CD4-positive, alpha-beta T cell (primary cell): ENCODE measurements at regions of chr10 and their contacts with region 1.

Region 1: GRCh38 chr10:69004821-69005220 is 16.2 kb downstream of the KIFBP start:
- DNase-seq: peak in 3 of 14 experiments; percentile 71 to 75 (median 74)
- ATAC-seq: peak; percentile 79
- H3K4me3 ChIP-seq: no peak overlapping the region
- H3K4me3 Mint-ChIP-seq: no peak overlapping the region
- H3K27ac ChIP-seq: no peak overlapping the region
- H3K27ac Mint-ChIP-seq: no peak overlapping the region
- H3K4me1 ChIP-seq: no peaks in the 10 kb centered on the region
- H3K4me1 Mint-ChIP-seq: peaks cover 5% of the 10 kb centered on the region
- H3K27me3 ChIP-seq: no peaks in the 10 kb centered on the region
- H3K27me3 Mint-ChIP-seq: no peaks in the 10 kb centered on the region
- CTCF ChIP-seq: peak; percentile 75

Region 2: DNA sequence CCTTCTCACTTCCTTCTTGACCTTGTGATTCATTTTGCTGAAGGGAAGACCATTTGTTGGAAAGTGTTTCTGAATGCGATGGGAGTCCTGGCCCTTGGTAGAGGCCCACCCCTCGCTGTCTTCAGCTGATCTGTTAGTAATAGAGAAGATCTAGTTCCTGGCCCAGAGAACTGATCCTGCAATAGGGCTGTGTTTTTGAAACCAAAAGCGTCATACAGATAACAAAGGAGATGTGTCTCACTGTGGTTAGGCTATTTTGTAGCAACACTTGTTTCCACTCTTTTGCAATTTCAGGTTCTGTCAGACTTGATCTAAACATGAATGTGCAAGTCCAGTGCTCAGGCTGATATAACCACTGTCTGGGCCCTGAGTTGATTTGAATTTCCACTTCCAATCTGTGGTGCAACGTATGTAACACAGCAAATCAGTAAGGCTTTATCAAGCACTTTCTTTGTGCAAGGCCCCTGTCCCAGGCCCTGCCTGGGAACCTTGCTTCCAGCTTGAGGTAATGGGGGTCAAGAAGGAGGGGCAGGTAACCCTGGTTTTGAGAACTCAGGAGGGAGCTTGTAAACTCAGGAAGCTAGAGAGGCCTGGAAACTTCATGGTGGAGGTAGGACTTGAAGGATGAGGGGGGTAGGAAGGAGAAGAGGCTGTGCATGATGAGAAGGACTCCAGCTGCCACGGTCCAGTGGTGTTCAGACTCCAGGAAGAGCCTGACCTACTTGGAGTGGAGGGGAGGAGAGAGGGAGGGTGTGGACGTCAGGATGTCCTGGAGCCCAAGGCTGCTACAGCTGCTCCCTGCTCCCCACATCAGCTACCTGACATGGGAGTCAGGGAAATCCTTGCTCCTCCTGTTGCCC is 40.9 kb after region 1 on chr10:
- CTCF ChIA-PET with region 1: interaction called, 4 read pairs
- POLR2A ChIA-PET with region 1: interaction called, 3 read pairs
- intact Hi-C with region 1: loop called in 1 of 2 experiments (anchors 5 kb)
- DNase-seq: peak in 10 of 14 experiments; percentile 10 to 78 (median 22)
- ATAC-seq: peak; percentile 83
- H3K4me3 ChIP-seq: no peak overlapping the region
- H3K4me3 Mint-ChIP-seq: peak overlapping the region; percentile 69
- H3K27ac ChIP-seq: peak overlapping the region; percentile 60 to 72
- H3K27ac Mint-ChIP-seq: peak overlapping the region; percentile 93
- H3K4me1 ChIP-seq: peaks cover 52% of the 10 kb centered on the region
- H3K4me1 Mint-ChIP-seq: peaks cover 31% of the 10 kb centered on the region
- H3K27me3 ChIP-seq: no peaks in the 10 kb centered on the region
- H3K27me3 Mint-ChIP-seq: no peaks in the 10 kb centered on the region
- CTCF ChIP-seq: no peak

Region 3: DNA sequence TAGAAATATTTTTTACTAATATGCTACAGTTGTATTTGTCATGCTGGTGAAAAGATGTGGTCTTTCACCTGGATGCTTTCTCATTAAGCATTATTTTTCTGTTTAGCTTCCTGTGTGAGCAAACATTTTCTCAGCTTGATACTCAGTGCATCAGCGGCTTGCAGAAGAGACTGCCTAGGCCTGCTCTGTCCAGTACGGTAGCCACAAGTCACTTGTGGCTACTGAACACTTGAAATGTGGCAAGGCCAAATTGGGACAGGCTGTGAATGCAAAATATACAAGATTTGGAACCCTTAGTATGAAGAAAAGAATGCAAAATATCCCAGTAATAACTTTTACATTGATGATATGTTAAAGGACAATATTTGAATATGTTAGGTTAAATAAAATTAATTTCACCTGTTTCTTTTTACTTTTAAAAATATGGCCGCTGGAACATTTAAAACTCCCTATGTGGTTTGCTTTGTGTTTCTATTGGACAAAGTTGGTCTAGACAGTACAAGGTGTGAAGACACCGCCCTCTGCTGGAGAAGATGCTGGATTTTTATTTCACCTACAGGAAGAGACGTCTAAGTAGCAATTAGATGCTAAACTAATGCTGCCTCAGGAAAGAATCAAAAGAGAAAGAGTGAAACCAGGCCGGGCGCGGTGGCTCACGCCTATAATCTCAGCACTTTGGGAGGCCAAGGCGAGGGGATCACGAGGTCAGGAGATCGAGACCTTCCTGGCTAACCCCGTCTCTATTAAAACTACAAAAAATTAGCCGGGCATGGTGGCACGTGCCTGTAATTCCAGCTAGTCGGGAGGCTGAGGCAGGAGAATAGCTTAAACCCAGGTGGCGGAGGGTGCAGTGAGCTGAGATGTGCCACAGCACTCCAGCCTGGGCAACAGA is 88.4 kb after region 1 on chr10:
- CTCF ChIA-PET with region 1: interaction called, 57 read pairs
- POLR2A ChIA-PET with region 1: interaction called, 54 read pairs
- intact Hi-C with region 1: loop called (anchors 1 kb)
- DNase-seq: peak; percentile 54 to 96 (median 76)
- ATAC-seq: peak; percentile 33
- H3K4me3 ChIP-seq: no peak overlapping the region
- H3K4me3 Mint-ChIP-seq: peak overlapping the region; percentile 36
- H3K27ac ChIP-seq: peak overlapping the region; percentile 49 to 52
- H3K27ac Mint-ChIP-seq: peak overlapping the region; percentile 94
- H3K4me1 ChIP-seq: peaks cover 60% of the 10 kb centered on the region
- H3K4me1 Mint-ChIP-seq: peaks cover 53% of the 10 kb centered on the region
- H3K27me3 ChIP-seq: no peaks in the 10 kb centered on the region
- H3K27me3 Mint-ChIP-seq: no peaks in the 10 kb centered on the region
- CTCF ChIP-seq: peak; percentile 88

Region 4: DNA sequence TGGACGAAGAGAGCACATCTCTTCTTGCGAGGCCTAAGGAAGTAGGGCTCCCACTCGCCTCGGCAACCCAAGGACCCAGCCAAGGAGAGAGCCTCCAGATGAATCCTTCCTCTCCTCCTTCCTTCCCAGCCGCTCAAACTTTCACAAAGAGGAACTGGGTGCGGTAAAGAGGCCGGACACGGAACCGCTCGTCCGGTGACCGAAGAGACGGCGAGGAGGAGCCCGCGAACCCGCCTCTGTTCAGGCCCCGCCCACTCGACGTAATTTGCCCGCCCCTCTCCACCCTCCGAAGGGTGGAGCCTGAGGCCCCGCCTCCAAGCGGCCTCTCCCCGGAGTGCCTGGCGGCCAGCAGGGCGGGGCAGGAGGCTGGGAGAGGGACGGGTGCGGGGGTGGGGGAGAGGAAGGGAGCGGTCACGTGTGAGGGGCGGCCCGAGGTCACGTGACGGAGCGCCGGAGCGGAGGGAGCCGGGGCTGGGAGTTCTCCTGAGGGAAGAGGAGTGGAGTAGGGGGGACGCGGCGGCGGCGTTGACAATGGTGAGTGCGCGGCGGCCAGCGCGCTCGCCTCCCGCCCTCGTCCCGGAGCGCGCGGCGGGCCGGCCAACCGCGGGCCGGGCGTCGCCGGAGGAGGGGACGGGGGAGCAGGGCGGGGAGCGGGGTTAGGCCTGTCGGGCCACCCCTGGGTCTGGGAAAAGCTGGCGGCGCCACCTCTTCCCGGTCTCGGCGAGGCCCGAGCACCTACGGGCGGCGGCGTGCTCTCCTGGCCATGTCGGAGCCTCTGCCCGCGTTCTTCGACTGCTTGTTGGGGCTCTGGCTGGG is 119.1 kb after region 1 on chr10 and contains the start of gene VPS26A:
- CTCF ChIA-PET with region 1: interaction called, 20 read pairs
- POLR2A ChIA-PET with region 1: no interaction called
- intact Hi-C with region 1: loop called (anchors 1 kb)
- DNase-seq: peak; percentile 97 to 99 (median 98)
- ATAC-seq: peak; percentile 94
- H3K4me3 ChIP-seq: peak within 1 kb of the TSS; percentile 90
- H3K4me3 Mint-ChIP-seq: peak within 1 kb of the TSS; percentile 97
- H3K27ac ChIP-seq: peak within 1 kb of the TSS; percentile 92 to 95
- H3K27ac Mint-ChIP-seq: peak within 1 kb of the TSS; percentile 98
- H3K4me1 ChIP-seq: peaks cover 35% of the 10 kb centered on the region
- H3K4me1 Mint-ChIP-seq: peaks cover 27% of the 10 kb centered on the region
- H3K27me3 ChIP-seq: no peaks in the 10 kb centered on the region
- H3K27me3 Mint-ChIP-seq: no peaks in the 10 kb centered on the region
- CTCF ChIP-seq: peak; percentile 48
- total RNA-seq, gene VPS26A: 32.8 to 33.0 TPM

Region 5: DNA sequence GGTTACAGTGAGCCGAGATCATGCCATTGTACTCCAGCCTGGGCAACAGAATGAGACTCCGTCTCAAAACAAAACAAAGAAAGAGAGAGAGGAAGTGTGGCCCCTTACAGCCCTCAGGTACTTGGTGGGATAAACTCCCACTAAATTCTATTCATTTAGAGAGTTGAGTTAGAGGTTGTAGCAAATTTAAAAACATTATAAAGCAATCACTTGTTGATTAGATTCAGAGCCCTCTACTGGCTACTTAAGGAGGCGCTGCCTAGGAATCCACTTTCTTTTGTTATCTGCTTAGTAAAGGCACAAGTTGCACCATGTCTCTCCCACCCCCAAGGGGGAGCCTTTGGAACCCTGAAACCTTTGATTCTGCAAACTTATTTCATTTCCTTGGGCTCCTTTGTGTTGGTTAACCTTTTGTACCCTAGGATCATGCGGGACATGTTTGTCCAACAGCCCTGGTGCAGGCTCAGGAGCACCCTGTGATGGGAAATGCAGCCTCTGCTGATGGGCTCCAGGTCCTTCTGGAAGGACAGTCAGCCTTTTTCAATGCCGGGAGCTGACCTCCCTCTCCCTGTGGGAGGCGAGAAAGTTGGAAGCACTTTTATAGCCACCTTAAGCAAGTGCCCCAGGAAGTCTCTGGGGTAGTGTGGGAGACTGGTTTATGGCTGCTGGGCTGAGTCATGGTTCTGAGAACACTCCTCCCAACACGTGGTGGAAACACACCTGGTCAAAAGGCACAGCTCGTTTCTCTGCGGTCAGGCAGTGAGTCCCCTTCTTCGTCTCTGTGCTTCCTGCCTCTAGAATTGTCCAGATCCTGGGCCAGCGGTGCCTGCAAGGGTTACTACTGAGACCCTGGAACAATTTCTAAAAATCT is 217.6 kb after region 1 on chr10:
- CTCF ChIA-PET with region 1: no interaction called
- POLR2A ChIA-PET with region 1: no interaction called
- intact Hi-C with region 1: loop called in 1 of 2 experiments (anchors 10 kb)
- DNase-seq: peak; percentile 24 to 88 (median 45)
- ATAC-seq: peak; percentile 85
- H3K4me3 ChIP-seq: peak overlapping the region; percentile 19
- H3K4me3 Mint-ChIP-seq: peak overlapping the region; percentile 55
- H3K27ac ChIP-seq: peak overlapping the region in 1 of 2 donors; percentile 25
- H3K27ac Mint-ChIP-seq: peak overlapping the region; percentile 67
- H3K4me1 ChIP-seq: peaks cover 45% of the 10 kb centered on the region
- H3K4me1 Mint-ChIP-seq: peaks cover 35% of the 10 kb centered on the region
- H3K27me3 ChIP-seq: no peaks in the 10 kb centered on the region
- H3K27me3 Mint-ChIP-seq: no peaks in the 10 kb centered on the region
- CTCF ChIP-seq: peak; percentile 87

Region 6: GRCh38 chr10:69392481-69393000 is 387.7 kb after region 1 on chr10:
- CTCF ChIA-PET with region 1: interaction called, 3 read pairs
- POLR2A ChIA-PET with region 1: no interaction called
- intact Hi-C with region 1: loop called in 1 of 2 experiments (anchors 5 kb)
- DNase-seq: peak; percentile 73 to 91 (median 78)
- ATAC-seq: peak; percentile 100
- H3K4me3 ChIP-seq: no peak overlapping the region
- H3K4me3 Mint-ChIP-seq: no peak overlapping the region
- H3K27ac ChIP-seq: no peak overlapping the region
- H3K27ac Mint-ChIP-seq: peak overlapping the region; percentile 64
- H3K4me1 ChIP-seq: peaks cover 14% of the 10 kb centered on the region
- H3K4me1 Mint-ChIP-seq: peaks cover 25% of the 10 kb centered on the region
- H3K27me3 ChIP-seq: no peaks in the 10 kb centered on the region
- H3K27me3 Mint-ChIP-seq: no peaks in the 10 kb centered on the region
- CTCF ChIP-seq: peak; percentile 83